ENCODE measurements at regions of chr14 and their contacts with region 1.

Region 1: GRCh38 chr14:87745507-87746118 is 247.4 kb downstream of the GALC start:
- DNase-seq: peak; percentile 52
- H3K4me3 ChIP-seq: no peak overlapping the region
- H3K27ac ChIP-seq: no peak overlapping the region
- H3K4me1 ChIP-seq: no peaks in the 10 kb centered on the region
- H3K27me3 ChIP-seq: no peaks in the 10 kb centered on the region
- CTCF ChIP-seq: peak; percentile 55
- EP300 ChIP-seq: no peak
- RAD21 ChIP-seq: peak; percentile 38

Region 2: GRCh38 chr14:87732562-87732961 is 13.1 kb before region 1 on chr14:
- CTCF ChIA-PET with region 1: interaction called, 34 read pairs
- POLR2A ChIA-PET with region 1: no interaction called
- DNase-seq: no peak
- H3K4me3 ChIP-seq: peak overlapping the region in 1 of 2 experiments; percentile 6; a peak in 1 of 4 replicates
- H3K27ac ChIP-seq: no peak overlapping the region
- H3K4me1 ChIP-seq: no peaks in the 10 kb centered on the region
- H3K27me3 ChIP-seq: no peaks in the 10 kb centered on the region
- CTCF ChIP-seq: no peak
- EP300 ChIP-seq: no peak
- RAD21 ChIP-seq: no peak

Measured in SK-N-SH (cell line).